Activated CD4-positive, alpha-beta T cell treated with anti-CD3 and anti-CD28 coated beads for 36 hours (primary cell): ENCODE measurements at regions of chr10 and their contacts with region 1.

Region 1: DNA sequence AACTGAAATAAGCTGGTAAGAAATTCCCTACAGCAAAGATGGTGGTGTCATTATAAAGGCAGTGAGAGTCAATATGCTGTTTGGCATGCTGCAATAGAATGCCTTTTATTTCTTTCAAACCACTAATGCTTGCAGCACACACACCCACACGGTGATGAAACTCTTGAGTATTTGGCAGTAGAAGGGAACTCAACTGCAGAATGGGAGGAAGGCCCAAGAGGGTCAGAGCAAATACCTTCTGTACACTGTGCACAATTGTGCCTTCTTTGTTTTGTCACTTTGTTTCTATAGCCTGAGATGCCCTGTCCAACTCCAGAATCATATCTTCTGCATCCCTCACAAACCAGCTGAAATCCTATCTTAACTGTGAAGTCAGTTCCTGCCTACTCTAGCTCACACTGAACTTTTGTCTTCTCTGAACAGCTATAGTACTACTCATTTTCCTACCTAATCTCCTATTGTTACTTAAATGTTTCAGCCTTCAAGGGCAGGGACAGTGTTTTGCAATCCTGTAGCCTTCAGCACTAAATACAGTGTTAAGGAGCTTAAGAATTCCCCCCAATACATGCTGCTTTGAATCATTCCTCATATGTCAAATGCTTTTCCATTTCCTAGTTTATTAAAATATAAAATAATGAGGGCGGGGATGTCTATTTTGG is 22.2 kb downstream of the MMS19 start:
- DNase-seq: no peak
- ATAC-seq: no peak
- H3K4me3 Mint-ChIP-seq: no peak overlapping the region
- H3K27ac Mint-ChIP-seq: no peak overlapping the region
- H3K4me1 Mint-ChIP-seq: no peaks in the 10 kb centered on the region
- H3K27me3 Mint-ChIP-seq: no peaks in the 10 kb centered on the region

Region 2: DNA sequence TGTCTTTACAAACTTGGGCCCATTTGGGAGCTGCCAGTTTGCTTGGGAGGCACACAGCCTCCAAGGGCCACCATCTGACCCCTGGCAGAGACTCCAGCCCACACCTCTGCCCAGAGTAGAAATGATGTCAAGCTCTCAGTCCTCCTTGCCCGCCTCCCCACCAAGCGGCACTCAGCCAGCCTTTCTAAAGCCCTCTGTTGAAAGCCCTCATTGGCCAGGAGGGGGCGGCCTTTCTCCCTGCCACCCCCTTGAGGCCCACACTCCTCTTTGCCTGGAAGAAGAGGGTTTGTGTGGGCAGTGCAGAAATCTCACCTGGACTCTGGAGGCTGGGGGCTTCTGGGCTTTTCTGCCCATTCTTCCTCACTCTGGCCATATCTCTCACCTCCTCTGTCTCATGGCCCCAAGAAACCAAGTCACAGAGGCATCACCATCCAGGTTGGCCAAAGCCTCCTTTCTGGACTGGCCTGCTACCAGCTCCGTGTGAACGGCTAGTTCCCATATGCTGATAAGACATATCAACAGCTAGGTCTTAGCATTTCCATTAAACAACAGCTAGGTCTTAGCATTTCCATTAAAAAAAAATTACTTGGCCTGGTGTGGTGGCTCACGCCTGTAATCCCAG is 58.8 kb after region 1 on chr10:
- CTCF ChIA-PET with region 1: interaction called, 11 read pairs
- POLR2A ChIA-PET with region 1: no interaction called
- intact Hi-C with region 1: no loop called
- DNase-seq: peak; percentile 73
- ATAC-seq: peak; percentile 87
- H3K4me3 Mint-ChIP-seq: no peak overlapping the region
- H3K27ac Mint-ChIP-seq: no peak overlapping the region
- H3K4me1 Mint-ChIP-seq: no peaks in the 10 kb centered on the region
- H3K27me3 Mint-ChIP-seq: no peaks in the 10 kb centered on the region